Activated naive CD4-positive, alpha-beta T cell treated with anti-CD3 and anti-CD28 coated beads for 36 hours (primary cell): ENCODE measurements at regions of chr17 and their contacts with region 1.

Region 1: DNA sequence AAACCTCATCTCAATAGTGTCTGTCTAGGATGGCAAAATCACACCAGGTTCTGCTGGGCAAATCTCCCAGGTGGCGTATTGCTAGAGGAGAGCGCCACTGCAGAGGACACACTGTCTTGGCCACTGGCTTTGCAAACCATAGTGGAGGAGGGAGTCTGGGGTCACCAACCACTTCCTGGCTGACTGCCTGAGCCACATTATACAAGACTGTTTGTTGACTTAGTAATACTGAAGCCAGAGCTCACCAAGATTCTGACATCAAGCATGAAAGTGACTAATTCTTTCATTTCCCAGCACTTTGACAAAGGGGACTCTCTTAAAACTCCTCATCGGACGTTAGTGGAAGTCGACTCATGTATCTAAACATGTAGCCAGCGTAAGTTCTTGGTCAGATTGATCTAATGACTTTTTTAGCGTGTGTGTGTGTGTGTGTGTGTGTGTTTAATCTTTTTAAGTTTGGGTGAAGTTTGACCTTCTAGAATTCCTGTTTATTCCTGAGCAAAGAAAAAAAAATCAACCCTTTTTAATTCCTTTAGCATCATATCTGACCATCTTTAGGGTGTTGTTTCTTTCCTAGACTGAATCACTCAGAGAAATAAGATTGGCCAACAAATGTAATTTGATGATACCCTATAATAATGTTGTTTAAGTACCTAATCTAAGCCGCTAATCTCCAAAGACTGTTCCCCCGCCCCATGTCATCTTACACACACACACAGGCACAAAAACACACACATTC is 13.7 kb downstream of the PITPNC1 start:
- DNase-seq: peak; percentile 89
- H3K4me3 Mint-ChIP-seq: peak overlapping the region; percentile 62
- H3K27ac Mint-ChIP-seq: peak overlapping the region; percentile 99
- H3K4me1 Mint-ChIP-seq: peaks cover 88% of the 10 kb centered on the region
- H3K27me3 Mint-ChIP-seq: no peaks in the 10 kb centered on the region

Region 2: DNA sequence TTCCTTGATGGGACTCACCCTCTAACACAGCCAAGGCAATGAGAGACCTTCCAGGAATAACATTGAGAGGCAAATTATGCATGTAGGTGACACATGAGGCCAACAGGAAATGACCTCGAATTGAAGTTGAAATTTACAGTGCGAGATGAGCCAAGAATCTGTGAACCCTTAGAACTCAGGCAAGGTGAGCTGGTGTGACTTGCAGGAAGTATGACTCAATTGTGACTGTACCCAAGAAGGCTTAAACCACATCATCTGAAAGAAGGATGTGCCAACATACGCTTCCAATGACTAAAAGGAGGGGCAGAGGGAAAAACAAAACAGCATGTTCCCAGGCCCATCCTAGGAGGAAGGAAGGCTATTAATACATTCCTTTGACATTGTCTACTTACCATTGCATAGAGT is 31.1 kb after region 1 on chr17:
- CTCF ChIA-PET with region 1: interaction called, 8 read pairs
- intact Hi-C with region 1: loop called (anchors 1 kb)
- DNase-seq: peak; percentile 78
- H3K4me3 Mint-ChIP-seq: no peak overlapping the region
- H3K27ac Mint-ChIP-seq: peak overlapping the region; percentile 97
- H3K4me1 Mint-ChIP-seq: peaks cover 91% of the 10 kb centered on the region
- H3K27me3 Mint-ChIP-seq: no peaks in the 10 kb centered on the region

Region 3: DNA sequence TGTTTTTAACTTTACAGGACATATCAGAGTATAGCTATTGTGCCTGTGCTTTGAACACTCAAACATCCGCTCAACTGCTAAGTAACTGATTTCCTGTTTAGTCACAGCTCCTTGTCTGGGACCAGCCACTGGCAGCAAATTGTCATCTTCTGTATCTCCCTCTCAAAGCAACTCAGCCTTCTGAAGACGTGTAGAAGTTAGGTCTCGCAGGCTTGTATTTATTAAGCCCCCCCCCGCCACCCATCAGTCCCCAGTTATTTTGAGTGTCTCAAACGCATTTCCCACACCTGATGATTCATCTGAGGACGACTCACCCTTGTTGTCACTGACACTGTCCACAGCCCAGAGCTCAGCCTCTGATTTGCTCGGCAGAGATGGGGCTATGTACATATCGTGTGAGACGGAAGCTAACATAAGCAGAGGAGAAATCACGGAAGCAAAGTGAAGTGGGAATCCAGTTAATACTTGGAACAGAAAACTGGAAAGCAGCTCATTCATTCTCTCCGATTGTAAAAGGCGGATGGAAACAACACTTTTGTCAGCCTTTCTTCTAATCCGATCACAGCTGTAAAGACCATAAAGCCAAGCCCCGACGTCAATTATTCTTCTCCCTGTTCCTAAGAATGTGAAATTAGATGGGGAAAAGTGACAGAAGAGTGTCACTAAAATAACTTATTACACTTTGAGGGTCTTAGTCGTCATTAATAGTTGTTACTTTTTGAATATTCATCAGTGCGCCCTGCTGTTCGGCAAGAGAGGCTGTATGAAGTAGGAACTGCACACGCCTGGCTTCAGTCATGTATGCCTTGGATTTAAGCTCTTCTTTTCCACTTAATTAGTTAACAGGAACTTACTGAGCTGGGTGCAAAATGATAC is 50.5 kb after region 1 on chr17:
- CTCF ChIA-PET with region 1: interaction called, 42 read pairs
- intact Hi-C with region 1: no loop called
- DNase-seq: peak; percentile 90
- H3K4me3 Mint-ChIP-seq: peak overlapping the region; percentile 75
- H3K27ac Mint-ChIP-seq: peak overlapping the region; percentile 96
- H3K4me1 Mint-ChIP-seq: peaks cover 76% of the 10 kb centered on the region
- H3K27me3 Mint-ChIP-seq: no peaks in the 10 kb centered on the region

Region 4: GRCh38 chr17:67469208-67469895 is 78.5 kb after region 1 on chr17:
- CTCF ChIA-PET with region 1: interaction called, 167 read pairs
- intact Hi-C with region 1: no loop called
- DNase-seq: peak; percentile 72
- H3K4me3 Mint-ChIP-seq: peak overlapping the region; percentile 48
- H3K27ac Mint-ChIP-seq: peak overlapping the region; percentile 87
- H3K4me1 Mint-ChIP-seq: peaks cover 63% of the 10 kb centered on the region
- H3K27me3 Mint-ChIP-seq: no peaks in the 10 kb centered on the region

Region 5: DNA sequence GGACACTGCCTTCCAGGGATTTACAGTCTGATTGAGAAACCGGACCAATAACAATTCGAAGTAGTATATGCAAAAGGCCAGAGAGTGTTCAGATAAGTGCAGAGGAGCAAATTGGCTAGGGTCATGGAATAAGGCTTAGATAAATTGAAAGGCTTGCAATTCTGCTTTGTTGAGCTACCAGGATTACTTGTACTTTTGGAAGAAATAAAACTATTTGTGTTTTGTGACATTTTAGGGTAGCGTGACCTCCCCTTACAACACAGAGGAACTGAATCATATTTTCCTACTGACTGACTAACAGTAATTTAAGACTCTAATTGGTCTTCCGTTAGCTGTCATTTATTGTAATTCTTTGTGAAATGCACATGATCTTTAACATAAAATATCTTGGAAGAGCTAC is 91.0 kb after region 1 on chr17:
- CTCF ChIA-PET with region 1: interaction called, 167 read pairs
- intact Hi-C with region 1: no loop called
- DNase-seq: no peak
- H3K4me3 Mint-ChIP-seq: peak overlapping the region; percentile 3
- H3K27ac Mint-ChIP-seq: peak overlapping the region; percentile 89
- H3K4me1 Mint-ChIP-seq: peaks cover 80% of the 10 kb centered on the region
- H3K27me3 Mint-ChIP-seq: no peaks in the 10 kb centered on the region